ENCODE measurements at regions of chr7 and their contacts with region 1.

Region 1: DNA sequence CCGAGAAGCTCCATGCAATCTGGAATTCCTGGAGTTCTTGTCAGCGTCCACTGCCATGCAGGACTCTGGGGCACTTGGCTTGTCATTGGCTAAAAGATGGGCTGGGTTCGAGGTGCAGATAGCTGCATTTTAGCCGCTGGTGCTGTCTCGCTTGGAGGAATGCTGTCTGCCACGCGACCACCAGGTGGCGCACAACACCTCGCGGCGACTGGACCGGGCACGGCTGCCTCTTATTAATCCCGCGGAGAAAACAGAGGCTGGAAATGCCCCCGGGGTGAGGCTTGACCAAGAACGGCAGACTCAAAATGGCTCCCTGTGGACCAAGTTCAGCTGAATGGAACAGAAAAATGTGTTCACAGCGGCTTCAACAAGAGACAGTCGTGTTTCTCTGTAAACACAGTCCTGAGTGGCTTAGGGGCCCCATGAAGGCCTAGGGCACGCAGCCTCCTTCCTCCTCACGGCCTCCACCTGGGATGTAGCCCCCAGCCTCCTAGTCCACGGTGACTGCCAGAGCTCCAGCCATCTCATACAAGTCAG is 46.2 kb downstream of the AOC1 start:
- DNase-seq: peak; percentile 44 to 81 (median 70)
- ATAC-seq: peak; percentile 84
- H3K4me3 ChIP-seq: no peak overlapping the region
- H3K4me3 Mint-ChIP-seq: peak overlapping the region in 1 of 10 donors; percentile 19
- H3K27ac ChIP-seq: no peak overlapping the region
- H3K27ac Mint-ChIP-seq: peak overlapping the region in 1 of 9 donors; percentile 34
- H3K4me1 ChIP-seq: no peaks in the 10 kb centered on the region
- H3K4me1 Mint-ChIP-seq: peaks cover 0 to 11% (median 5%) of the 10 kb centered on the region in 7 donors
- H3K27me3 ChIP-seq: no peaks in the 10 kb centered on the region
- H3K27me3 Mint-ChIP-seq: peaks cover 32 to 66% (median 60%) of the 10 kb centered on the region in 5 donors

Region 2: GRCh38 chr7:150778738-150779301 is 119.7 kb before region 1 on chr7:
- CTCF ChIA-PET with region 1: interaction called, 3 read pairs
- POLR2A ChIA-PET with region 1: no interaction called
- intact Hi-C with region 1: loop called in 1 of 2 experiments (anchors 10 kb)
- DNase-seq: peak; percentile 31 to 76 (median 60)
- ATAC-seq: peak; percentile 88
- H3K4me3 ChIP-seq: no peak overlapping the region
- H3K4me3 Mint-ChIP-seq: no peak overlapping the region
- H3K27ac ChIP-seq: no peak overlapping the region
- H3K27ac Mint-ChIP-seq: no peak overlapping the region
- H3K4me1 ChIP-seq: no peaks in the 10 kb centered on the region
- H3K4me1 Mint-ChIP-seq: peaks cover 0 to 8% (median 4%) of the 10 kb centered on the region in 7 donors
- H3K27me3 ChIP-seq: no peaks in the 10 kb centered on the region
- H3K27me3 Mint-ChIP-seq: peaks cover 0 to 42% (median 0%) of the 10 kb centered on the region in 5 donors

Region 3: DNA sequence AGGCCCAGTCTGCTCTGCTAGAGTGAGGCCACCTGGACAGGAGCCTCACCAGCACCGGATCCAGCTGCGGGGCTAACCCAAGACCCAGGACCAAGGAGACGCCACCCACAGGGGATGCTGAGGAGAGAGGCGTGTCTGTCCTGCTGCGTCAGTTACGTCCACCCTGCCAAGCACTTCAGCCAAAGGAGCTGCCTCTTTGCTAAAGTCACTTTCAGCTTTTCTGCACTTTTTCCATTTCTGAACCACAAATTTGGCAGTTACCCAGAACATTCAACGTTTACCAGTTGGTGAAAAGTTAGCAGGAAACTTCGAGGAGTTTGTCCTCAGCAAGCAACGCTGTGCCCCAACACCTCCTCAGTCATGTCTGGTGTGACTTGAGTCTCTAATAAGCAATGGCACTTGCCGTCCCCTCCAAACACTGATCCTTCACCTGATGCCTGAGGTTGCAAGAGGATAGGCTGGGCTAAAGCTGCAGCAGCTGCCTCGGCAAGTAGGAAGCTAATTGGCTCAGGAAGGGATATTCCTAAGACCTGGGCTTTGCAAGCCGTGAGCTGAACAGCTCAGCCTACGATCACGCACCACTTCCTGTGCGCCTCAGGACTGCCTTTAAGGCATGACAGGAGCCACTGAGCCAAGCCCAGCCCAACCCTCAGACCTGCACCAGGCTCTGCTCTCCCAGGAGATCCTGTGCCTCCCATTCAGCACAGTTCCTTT is 39.5 kb after region 1 on chr7:
- CTCF ChIA-PET with region 1: no interaction called
- POLR2A ChIA-PET with region 1: no interaction called
- intact Hi-C with region 1: loop called in 1 of 2 experiments (anchors 1 kb)
- DNase-seq: peak in 6 of 9 donors; percentile 19 to 52 (median 37)
- ATAC-seq: peak; percentile 66
- H3K4me3 ChIP-seq: peak overlapping the region; percentile 21
- H3K4me3 Mint-ChIP-seq: peak overlapping the region; percentile 37 to 88 (median 80)
- H3K27ac ChIP-seq: peak overlapping the region; percentile 23
- H3K27ac Mint-ChIP-seq: peak overlapping the region in 7 of 9 donors; percentile 60 to 86 (median 79)
- H3K4me1 ChIP-seq: peaks cover 16 to 36% of the 10 kb centered on the region in 2 donors
- H3K4me1 Mint-ChIP-seq: peaks cover 19 to 49% (median 44%) of the 10 kb centered on the region in 7 donors
- H3K27me3 ChIP-seq: no peaks in the 10 kb centered on the region
- H3K27me3 Mint-ChIP-seq: peaks cover 0 to 10% (median 0%) of the 10 kb centered on the region in 5 donors

Region 4: DNA sequence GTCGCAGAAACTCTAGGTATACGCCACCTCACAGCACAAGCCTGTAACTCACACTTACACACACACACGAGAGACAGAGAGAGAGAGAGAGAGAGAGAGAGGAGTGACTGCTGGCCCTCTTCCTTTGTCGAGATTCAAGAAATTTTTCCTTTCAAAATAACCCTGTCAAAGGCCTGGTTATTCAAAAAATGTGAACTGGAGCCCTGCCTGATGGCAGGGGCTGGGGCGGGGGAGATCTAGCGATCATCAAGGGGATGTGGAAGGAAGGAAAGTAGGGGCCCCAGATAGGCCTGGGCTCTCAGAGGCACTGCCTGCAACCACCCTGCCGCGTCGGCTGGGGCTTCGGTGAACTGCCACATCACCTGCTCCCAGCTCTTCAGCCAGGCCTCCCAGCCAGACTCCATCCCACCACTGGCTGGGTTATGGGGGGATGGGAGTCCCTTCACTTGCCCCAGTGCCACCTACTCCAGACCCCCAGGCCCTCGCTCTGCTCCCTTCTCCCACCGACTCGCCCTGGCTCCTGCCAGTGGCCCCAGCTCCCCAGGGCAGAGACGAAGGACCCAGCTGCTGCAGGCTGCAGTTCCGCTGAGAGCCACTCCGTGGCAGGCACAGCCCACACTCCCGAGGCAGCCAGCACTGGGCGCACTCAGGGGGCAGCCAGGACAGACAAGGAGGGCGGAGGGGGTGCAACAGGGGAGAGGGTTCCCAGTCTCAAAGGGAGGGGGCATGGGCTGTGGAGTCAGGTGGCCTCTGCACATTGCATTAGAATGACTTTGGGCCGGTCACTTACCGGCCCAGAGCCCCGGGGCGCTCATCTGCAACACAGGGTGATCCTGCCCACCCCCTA is 64.2 kb after region 1 on chr7:
- CTCF ChIA-PET with region 1: interaction called, 11 read pairs
- POLR2A ChIA-PET with region 1: no interaction called
- intact Hi-C with region 1: loop called in 1 of 2 experiments (anchors 1 kb)
- DNase-seq: peak; percentile 31 to 69 (median 53)
- ATAC-seq: peak; percentile 82
- H3K4me3 ChIP-seq: no peak overlapping the region
- H3K4me3 Mint-ChIP-seq: peak overlapping the region in 1 of 10 donors; percentile 51
- H3K27ac ChIP-seq: no peak overlapping the region
- H3K27ac Mint-ChIP-seq: no peak overlapping the region
- H3K4me1 ChIP-seq: no peaks in the 10 kb centered on the region
- H3K4me1 Mint-ChIP-seq: peaks cover 9 to 41% (median 24%) of the 10 kb centered on the region in 7 donors
- H3K27me3 ChIP-seq: no peaks in the 10 kb centered on the region
- H3K27me3 Mint-ChIP-seq: peaks cover 15 to 36% (median 20%) of the 10 kb centered on the region in 5 donors

Region 5: GRCh38 chr7:151110941-151111645 is 212.6 kb after region 1 on chr7:
- CTCF ChIA-PET with region 1: interaction called, 14 read pairs
- POLR2A ChIA-PET with region 1: no interaction called
- intact Hi-C with region 1: loop called (anchors 1 kb)
- DNase-seq: peak; percentile 41 to 79 (median 71)
- ATAC-seq: peak; percentile 82
- H3K4me3 ChIP-seq: no peak overlapping the region
- H3K4me3 Mint-ChIP-seq: peak overlapping the region in 1 of 10 donors; percentile 29
- H3K27ac ChIP-seq: no peak overlapping the region
- H3K27ac Mint-ChIP-seq: no peak overlapping the region
- H3K4me1 ChIP-seq: no peaks in the 10 kb centered on the region
- H3K4me1 Mint-ChIP-seq: peaks cover 0 to 9% (median 4%) of the 10 kb centered on the region in 7 donors
- H3K27me3 ChIP-seq: peaks cover 0 to 4% of the 10 kb centered on the region in 2 donors
- H3K27me3 Mint-ChIP-seq: peaks cover 0 to 20% (median 0%) of the 10 kb centered on the region in 5 donors

Region 6: DNA sequence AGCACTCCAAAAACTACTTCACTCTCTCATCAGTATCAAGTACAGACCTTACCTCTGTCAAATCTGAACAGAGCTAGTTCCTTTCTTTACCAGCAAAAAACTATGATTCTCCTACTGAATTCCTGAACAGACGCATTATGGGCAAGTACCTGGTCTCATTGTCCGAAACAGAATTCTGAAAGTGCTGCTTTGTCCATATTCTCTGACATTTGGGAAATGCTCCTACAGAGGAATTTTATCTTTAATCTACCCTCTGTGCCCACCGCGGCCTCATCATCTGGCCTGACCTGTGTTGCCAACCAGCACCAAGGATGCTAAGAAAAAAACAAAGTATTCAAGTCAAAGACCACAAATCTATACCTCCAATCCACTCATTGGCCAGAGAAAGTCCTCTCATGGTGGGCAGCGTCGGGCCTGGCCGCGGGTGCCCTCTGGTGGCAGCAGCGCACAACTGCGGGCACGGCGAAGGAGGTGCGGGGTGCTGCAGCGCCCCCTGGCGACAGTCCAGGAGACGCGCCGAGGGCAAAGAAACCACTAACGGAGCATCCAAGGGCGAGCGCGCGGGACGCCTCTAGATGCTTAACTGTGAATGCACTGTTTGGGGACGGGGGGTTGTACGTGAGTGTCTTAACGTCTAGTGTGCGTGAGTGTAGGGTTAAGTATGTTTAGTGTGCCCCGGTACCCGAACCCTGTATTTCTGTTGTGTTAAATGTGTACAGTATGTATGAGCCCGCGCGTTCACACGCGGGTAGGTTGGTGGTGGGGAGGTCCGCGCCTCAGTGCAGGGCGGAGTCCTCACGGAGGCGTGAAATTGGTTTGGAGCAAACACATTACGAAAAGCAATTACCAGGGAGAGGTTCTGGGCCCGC is 274.0 kb after region 1 on chr7:
- CTCF ChIA-PET with region 1: no interaction called
- POLR2A ChIA-PET with region 1: no interaction called
- intact Hi-C with region 1: loop called (anchors 1 to 5 kb)
- DNase-seq: peak; percentile 59 to 88 (median 78)
- ATAC-seq: peak; percentile 97
- H3K4me3 ChIP-seq: no peak overlapping the region
- H3K4me3 Mint-ChIP-seq: no peak overlapping the region
- H3K27ac ChIP-seq: no peak overlapping the region
- H3K27ac Mint-ChIP-seq: peak overlapping the region in 1 of 9 donors; percentile 41
- H3K4me1 ChIP-seq: peaks cover 0 to 3% of the 10 kb centered on the region in 2 donors
- H3K4me1 Mint-ChIP-seq: peaks cover 5 to 16% (median 12%) of the 10 kb centered on the region in 7 donors
- H3K27me3 ChIP-seq: peaks cover 0 to 7% of the 10 kb centered on the region in 2 donors
- H3K27me3 Mint-ChIP-seq: peaks cover 42 to 62% (median 54%) of the 10 kb centered on the region in 5 donors

Region 7: GRCh38 chr7:151304856-151305255 is 406.3 kb after region 1 on chr7:
- CTCF ChIA-PET with region 1: no interaction called
- POLR2A ChIA-PET with region 1: no interaction called
- intact Hi-C with region 1: loop called in 1 of 2 experiments (anchors 1 kb)
- DNase-seq: no peak
- ATAC-seq: no peak
- H3K4me3 ChIP-seq: no peak overlapping the region
- H3K4me3 Mint-ChIP-seq: peak overlapping the region; percentile 6 to 78 (median 63)
- H3K27ac ChIP-seq: no peak overlapping the region
- H3K27ac Mint-ChIP-seq: no peak overlapping the region
- H3K4me1 ChIP-seq: peaks cover 3 to 6% of the 10 kb centered on the region in 2 donors
- H3K4me1 Mint-ChIP-seq: peaks cover 0 to 21% (median 12%) of the 10 kb centered on the region in 7 donors
- H3K27me3 ChIP-seq: no peaks in the 10 kb centered on the region
- H3K27me3 Mint-ChIP-seq: peaks cover 19 to 46% (median 28%) of the 10 kb centered on the region in 5 donors

Measured in naive thymus-derived CD4-positive, alpha-beta T cell (primary cell).